ENCODE measurements at regions of chr2 and their contacts with region 1.

Region 1: GRCh38 chr2:130797493-130798435 is 39.0 kb upstream of the ARHGEF4 start:
- DNase-seq: peak; percentile 77
- ATAC-seq: peak; percentile 96
- H3K4me3 ChIP-seq: peak overlapping the region; percentile 57 to 82 (median 68)
- H3K27ac ChIP-seq: no peak overlapping the region
- H3K4me1 ChIP-seq: 0 out of 2 replicates have a peak, but pooled peaks cover 6% of the 10 kb centered on the region
- H3K27me3 ChIP-seq: peaks cover 4 to 17% of the 10 kb centered on the region in 2 experiments; a peak in 2 of 5 replicates
- CTCF ChIP-seq: peak; percentile 94
- EP300 ChIP-seq: peak in 1 of 2 experiments; percentile 26; a peak in 1 of 4 replicates
- POLR2A ChIP-seq: no peak; a peak in 1 of 4 replicates
- RAD21 ChIP-seq: peak; percentile 97

Region 2: DNA sequence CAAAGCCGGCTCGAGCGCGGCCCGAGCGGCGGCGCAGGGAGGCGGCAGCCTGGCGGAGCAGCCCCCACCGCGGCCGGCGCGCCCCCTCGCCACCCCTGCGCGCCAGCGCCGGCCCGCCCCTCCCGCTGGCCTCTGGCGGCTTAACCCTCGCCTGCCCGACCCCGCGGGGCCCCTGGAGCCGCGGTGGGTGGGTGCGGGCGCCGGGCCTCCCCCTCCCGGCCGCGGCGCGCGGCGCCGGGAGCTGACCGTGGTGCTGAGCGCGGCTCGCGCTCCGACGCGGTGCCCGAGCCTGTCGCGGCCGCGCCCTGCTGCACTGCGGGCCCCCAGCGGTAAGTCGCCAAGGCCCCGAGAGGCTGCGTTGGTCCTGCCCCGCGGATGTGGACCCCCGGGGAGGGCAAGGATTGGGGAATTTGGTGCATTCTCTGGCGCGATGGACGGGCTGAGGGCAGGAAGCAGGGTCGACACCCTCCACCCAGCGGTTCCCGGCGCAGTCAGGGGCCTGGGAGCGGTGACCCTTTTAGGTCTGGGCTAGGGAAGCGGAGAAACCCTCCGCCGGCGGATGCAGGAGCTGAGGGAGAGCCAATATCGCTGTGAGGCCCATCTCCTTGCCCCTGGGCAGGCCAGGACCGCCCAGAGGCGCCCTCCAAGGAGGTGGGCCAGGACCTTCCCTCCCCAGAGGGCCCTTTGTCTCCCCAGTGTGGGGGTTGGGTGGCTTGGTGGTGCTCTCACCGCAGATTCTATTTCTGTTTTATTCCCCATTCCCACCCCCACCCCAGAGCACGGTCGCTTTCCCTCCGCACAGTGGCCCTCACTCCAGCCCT is 41.5 kb before region 1 on chr2:
- CTCF ChIA-PET with region 1: no interaction called
- POLR2A ChIA-PET with region 1: no interaction called
- in situ Hi-C with region 1: no loop called
- intact Hi-C with region 1: no loop called
- DNase-seq: no peak
- ATAC-seq: peak; percentile 96
- H3K4me3 ChIP-seq: peak overlapping the region in 2 of 3 experiments; percentile 45 to 55; a peak in 3 of 6 replicates
- H3K27ac ChIP-seq: no peak overlapping the region
- H3K4me1 ChIP-seq: no peaks in the 10 kb centered on the region
- H3K27me3 ChIP-seq: peaks cover 3 to 38% of the 10 kb centered on the region in 2 experiments; a peak in 3 of 5 replicates
- CTCF ChIP-seq: peak; percentile 4; the same call in 1 of the 2 replicates
- EP300 ChIP-seq: no peak
- POLR2A ChIP-seq: no peak
- RAD21 ChIP-seq: peak; percentile 46

Region 3: GRCh38 chr2:130873700-130874346 is 76.1 kb after region 1 on chr2:
- CTCF ChIA-PET with region 1: interaction called, 57 read pairs
- POLR2A ChIA-PET with region 1: no interaction called
- in situ Hi-C with region 1: loop called (anchors 5 kb)
- intact Hi-C with region 1: loop called (anchors 1 kb)
- DNase-seq: peak; percentile 59
- ATAC-seq: peak; percentile 88
- H3K4me3 ChIP-seq: no peak overlapping the region
- H3K27ac ChIP-seq: no peak overlapping the region
- H3K4me1 ChIP-seq: no peaks in the 10 kb centered on the region
- H3K27me3 ChIP-seq: peaks cover 7 to 54% of the 10 kb centered on the region in 2 experiments; a peak in 3 of 5 replicates
- CTCF ChIP-seq: peak; percentile 86
- EP300 ChIP-seq: no peak
- POLR2A ChIP-seq: no peak
- RAD21 ChIP-seq: peak; percentile 72; the same call in 1 of the 2 replicates

Region 4: DNA sequence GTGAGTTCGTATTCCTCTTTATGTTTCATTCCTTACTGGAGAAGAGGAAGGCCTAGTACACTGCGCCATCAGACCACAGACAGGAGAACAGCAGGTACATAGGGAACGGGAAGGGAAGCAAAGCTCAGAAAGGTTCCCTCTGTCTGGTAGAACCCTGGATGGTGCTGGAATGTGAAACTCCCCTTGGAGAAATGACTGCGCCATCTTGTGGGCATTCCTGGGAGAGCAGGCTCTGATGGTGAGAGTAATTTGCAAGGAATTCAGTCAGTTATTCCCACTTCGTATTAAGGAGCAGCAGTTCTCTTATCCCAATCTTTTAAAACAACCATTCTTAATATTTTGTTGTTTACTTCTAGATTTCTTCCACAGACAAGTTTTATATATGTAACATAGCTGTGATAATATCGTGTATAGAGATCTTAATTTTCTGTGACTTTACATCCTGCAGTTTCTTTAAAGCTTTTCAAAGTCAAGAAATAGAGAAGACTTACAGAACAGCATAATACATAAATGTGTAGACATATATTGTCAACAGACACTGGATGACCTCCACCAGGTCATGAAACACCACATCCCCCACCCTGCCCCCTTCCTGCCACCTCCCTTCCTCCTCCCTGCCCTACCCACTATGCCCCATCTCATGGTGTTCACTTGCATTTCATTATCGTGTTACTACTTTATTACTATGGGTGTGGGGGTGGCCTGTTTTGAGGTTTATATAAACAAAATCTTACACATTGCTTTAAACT is 122.8 kb after region 1 on chr2:
- CTCF ChIA-PET with region 1: interaction called, 51 read pairs
- POLR2A ChIA-PET with region 1: no interaction called
- in situ Hi-C with region 1: loop called (anchors 5 kb)
- intact Hi-C with region 1: loop called (anchors 1 kb)
- DNase-seq: peak; percentile 62
- ATAC-seq: peak; percentile 89
- H3K4me3 ChIP-seq: no peak overlapping the region
- H3K27ac ChIP-seq: no peak overlapping the region
- H3K4me1 ChIP-seq: no peaks in the 10 kb centered on the region
- H3K27me3 ChIP-seq: peaks cover 6 to 29% of the 10 kb centered on the region in 2 experiments; a peak in 4 of 5 replicates
- CTCF ChIP-seq: peak; percentile 89
- EP300 ChIP-seq: no peak
- POLR2A ChIP-seq: no peak
- RAD21 ChIP-seq: peak; percentile 50; the same call in 1 of the 2 replicates